ENCODE measurements at regions of chr1 and their contacts with region 1.

Region 1: GRCh38 chr1:226083302-226084101 is 21.0 kb downstream of the H3-3A start:
- DNase-seq: peak; percentile 38
- ATAC-seq: peak; percentile 96
- H3K4me3 ChIP-seq: peak overlapping the region; percentile 68
- H3K27ac ChIP-seq: peak overlapping the region; percentile 24; the same call in 1 of the 2 replicates
- H3K4me1 ChIP-seq: peaks cover 6% of the 10 kb centered on the region; the same call in 1 of the 2 replicates
- H3K27me3 ChIP-seq: no peaks in the 10 kb centered on the region
- CTCF ChIP-seq: no peak
- EP300 ChIP-seq: no peak
- POLR2A ChIP-seq: peak; percentile 70
- RAD21 ChIP-seq: no peak

Region 2: DNA sequence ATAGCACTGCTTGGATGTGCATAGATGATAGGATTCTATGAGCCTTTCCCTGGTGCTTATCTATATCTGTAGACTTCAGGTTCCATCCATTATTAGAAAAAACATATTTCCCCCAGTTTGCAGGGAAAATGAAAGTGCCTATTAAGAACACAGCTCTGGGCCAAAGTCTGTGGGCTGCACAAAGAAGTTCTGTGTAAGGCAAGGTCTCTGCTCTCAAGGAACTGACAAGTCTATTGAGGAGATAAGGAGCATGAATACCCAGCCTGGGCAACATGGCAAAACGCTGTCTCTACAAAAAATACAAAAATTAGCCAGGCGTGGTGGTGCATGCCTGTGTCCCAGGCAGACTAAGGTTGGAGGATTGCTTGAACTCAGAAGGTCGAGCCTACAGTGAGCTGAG is 62.1 kb before region 1 on chr1:
- CTCF ChIA-PET with region 1: no interaction called
- POLR2A ChIA-PET with region 1: no interaction called
- RAD21 ChIA-PET with region 1: no interaction called
- SMC1A ChIA-PET with region 1: no interaction called
- in situ Hi-C with region 1: no loop called
- intact Hi-C with region 1: no loop called
- DNase-seq: no peak
- ATAC-seq: no peak
- H3K4me3 ChIP-seq: no peak overlapping the region
- H3K27ac ChIP-seq: no peak overlapping the region
- H3K4me1 ChIP-seq: no peaks in the 10 kb centered on the region
- H3K27me3 ChIP-seq: no peaks in the 10 kb centered on the region
- CTCF ChIP-seq: no peak
- EP300 ChIP-seq: no peak
- POLR2A ChIP-seq: no peak
- RAD21 ChIP-seq: no peak

Region 3: DNA sequence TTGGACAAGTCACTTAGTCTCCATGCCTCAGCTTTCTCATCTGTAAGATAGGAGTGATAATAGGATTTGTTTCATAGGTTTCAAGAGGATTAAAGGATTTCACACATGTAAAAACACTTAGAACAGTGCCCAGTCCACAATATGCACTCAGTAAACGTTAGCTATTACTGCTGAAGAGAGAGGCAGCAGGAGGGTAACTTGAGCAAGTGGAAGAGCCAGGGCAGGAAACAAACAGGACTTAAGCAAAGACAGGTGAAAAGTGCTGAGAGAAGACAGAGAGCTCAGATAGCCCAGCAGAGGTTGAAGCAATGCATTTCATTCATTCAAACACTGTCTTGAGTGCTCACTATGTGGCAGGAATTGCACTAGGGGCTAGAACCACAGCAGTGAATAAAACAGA is 42.1 kb before region 1 on chr1:
- CTCF ChIA-PET with region 1: no interaction called
- POLR2A ChIA-PET with region 1: no interaction called
- RAD21 ChIA-PET with region 1: no interaction called
- SMC1A ChIA-PET with region 1: no interaction called
- in situ Hi-C with region 1: no loop called
- intact Hi-C with region 1: no loop called
- DNase-seq: no peak
- ATAC-seq: no peak
- H3K4me3 ChIP-seq: no peak overlapping the region
- H3K27ac ChIP-seq: no peak overlapping the region
- H3K4me1 ChIP-seq: no peaks in the 10 kb centered on the region
- H3K27me3 ChIP-seq: no peaks in the 10 kb centered on the region; a peak in 1 of 4 replicates
- CTCF ChIP-seq: no peak
- EP300 ChIP-seq: no peak
- POLR2A ChIP-seq: no peak
- RAD21 ChIP-seq: no peak

Region 4: DNA sequence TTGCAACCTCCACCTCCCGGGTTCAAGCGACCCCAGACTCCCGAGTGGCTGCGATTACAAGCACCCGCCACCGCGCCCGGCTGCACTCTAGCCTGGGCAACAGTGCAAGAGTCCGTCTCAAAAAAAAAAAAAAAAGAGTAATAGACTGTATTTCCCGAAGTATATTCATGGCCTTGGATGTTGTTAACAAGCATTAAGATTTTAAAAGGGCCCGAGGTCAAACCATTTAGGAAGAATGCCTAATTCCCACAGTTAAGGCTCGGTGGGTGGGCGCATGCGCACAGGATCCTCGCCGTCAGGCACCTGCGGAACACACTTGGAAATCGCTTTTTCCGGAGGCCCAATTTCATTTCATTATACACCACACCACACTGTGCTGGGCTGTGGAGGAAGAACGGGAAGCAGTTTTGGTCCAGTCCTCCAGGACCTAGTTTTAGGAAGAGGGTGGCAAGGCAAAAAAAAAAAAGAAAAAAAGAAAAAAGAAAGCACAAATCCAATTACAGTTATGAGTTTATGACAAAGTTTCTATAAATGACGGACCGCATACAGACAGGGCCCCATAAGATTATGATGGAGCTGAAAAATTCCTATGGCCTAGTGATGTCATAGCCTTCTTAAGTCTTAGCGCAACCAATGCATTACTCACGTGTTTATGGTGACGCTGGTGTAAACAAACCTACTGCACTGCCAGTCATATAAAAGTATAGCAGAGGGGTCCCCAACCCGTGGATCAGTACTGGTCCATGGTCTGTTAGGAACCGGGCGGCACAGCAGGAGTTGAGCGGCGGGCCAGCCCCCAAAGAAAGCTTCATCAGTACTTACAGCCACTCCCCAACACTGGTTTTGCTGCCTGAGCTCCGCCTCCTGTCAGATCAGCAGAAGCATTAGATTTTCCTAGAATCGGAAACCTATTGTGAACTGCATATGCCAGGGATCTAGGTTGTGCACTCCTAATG is 17.2 kb after region 1 on chr1:
- CTCF ChIA-PET with region 1: interaction called, 4 read pairs
- POLR2A ChIA-PET with region 1: no interaction called
- RAD21 ChIA-PET with region 1: interaction called, 3 read pairs
- SMC1A ChIA-PET with region 1: interaction called, 16 read pairs
- in situ Hi-C with region 1: no loop called
- intact Hi-C with region 1: no loop called
- DNase-seq: no peak
- ATAC-seq: peak; percentile 79
- H3K4me3 ChIP-seq: peak overlapping the region; percentile 53
- H3K27ac ChIP-seq: no peak overlapping the region
- H3K4me1 ChIP-seq: peaks cover 10% of the 10 kb centered on the region; the same call in 1 of the 2 replicates
- H3K27me3 ChIP-seq: no peaks in the 10 kb centered on the region
- CTCF ChIP-seq: no peak
- EP300 ChIP-seq: no peak
- POLR2A ChIP-seq: no peak
- RAD21 ChIP-seq: no peak

Region 5: GRCh38 chr1:226109829-226110248 is 26.3 kb after region 1 on chr1:
- CTCF ChIA-PET with region 1: interaction called, 7 read pairs
- POLR2A ChIA-PET with region 1: interaction called, 6 read pairs
- RAD21 ChIA-PET with region 1: interaction called, 8 read pairs
- SMC1A ChIA-PET with region 1: interaction called, 10 read pairs
- in situ Hi-C with region 1: no loop called
- intact Hi-C with region 1: no loop called
- DNase-seq: no peak
- ATAC-seq: peak; percentile 71
- H3K4me3 ChIP-seq: peak overlapping the region; percentile 77
- H3K27ac ChIP-seq: peak overlapping the region; percentile 92
- H3K4me1 ChIP-seq: peaks cover 23% of the 10 kb centered on the region
- H3K27me3 ChIP-seq: no peaks in the 10 kb centered on the region
- CTCF ChIP-seq: peak in 2 of 3 experiments; percentile 12 to 20; a peak in 1 of 6 replicates
- EP300 ChIP-seq: no peak
- POLR2A ChIP-seq: 0 out of 2 replicates have a peak, but pooled peaks have one; percentile 13
- RAD21 ChIP-seq: peak; percentile 25; the same call in 1 of the 2 replicates

Measured in GM12878 (cell line).